ENCODE measurements at regions of chr5 and their contacts with region 1.

Region 1: DNA sequence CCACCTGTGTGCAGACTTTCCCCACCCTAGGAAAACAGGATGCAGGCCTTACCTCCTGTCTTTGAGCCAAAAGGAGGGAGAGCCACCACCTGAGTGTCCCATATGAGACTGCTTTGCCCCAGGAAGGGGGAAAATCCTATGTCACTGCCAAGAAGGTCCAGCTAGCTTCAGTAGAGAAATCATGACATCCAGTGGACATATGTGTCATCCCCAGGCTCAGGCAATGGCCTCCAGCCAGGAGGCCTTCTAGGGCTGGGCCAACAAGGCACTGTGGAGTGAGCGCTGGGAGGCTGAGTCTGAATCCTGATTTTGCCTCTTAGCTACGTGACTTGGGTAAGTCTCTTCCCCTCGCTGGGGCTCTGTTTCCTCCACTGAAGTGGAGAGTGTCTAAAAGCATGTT is 60.2 kb downstream of the SMIM23 start:
- DNase-seq: peak; percentile 72
- ATAC-seq: peak; percentile 64

Region 2: GRCh38 chr5:171630027-171630669 is 215.7 kb before region 1 on chr5:
- intact Hi-C with region 1: loop called (anchors 10 kb)
- DNase-seq: peak; percentile 74
- ATAC-seq: peak; percentile 92

Region 3: GRCh38 chr5:171736976-171737891 is 108.6 kb before region 1 on chr5:
- intact Hi-C with region 1: loop called (anchors 10 kb)
- DNase-seq: peak; percentile 82
- ATAC-seq: peak; percentile 86

Region 4: DNA sequence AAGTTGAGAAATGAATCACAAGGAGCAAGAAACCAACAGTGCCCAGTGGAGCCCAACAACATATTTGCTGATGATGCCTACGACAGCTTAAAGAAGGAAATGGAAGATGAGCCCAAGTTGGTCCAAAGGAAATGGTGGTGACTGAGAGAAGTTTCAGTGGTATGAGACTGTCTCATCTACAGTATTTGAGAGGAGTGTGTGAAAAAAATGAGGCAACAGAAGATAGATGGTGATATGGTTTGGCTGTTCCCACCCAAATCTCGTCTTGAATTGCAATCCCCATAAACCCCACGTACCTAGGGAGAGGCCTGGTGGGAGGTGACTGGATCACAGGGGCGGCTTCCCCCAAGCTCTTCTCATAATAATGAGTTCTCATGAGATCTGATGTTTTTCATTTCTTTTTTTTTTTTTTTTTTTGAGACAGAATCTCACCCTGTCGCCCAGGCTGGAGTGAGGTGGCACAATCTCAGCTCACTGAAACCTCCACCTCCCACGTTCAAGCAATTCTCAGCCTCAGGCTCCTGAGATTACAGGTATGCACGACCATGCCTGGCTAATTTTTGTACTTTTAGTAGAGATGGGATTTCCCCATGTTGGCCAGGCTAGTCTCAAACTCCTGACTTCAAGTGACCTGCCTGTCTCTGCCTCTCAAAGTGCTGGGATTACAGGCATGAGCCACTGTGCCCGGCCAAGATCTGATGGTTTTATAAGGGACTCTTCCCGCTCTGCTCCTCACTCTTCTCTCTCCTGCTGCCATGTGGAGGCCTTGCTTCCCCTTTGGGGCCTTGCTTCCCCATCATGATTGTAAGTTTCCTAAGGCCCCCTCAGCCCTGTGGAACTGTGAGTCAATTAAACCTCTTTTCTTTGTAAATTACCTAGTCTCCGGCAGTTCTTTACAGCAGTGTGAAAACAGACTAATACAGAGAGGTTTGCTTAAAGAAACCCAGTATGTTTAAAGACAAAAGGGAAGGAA is 378.3 kb after region 1 on chr5:
- intact Hi-C with region 1: no loop called
- DNase-seq: no peak
- ATAC-seq: no peak